ENCODE measurements at regions of chr3 and their contacts with region 1.

Region 1: GRCh38 chr3:134597390-134597970 is 53.3 kb downstream of the KY start:
- DNase-seq: no peak
- H3K4me3 ChIP-seq: peak overlapping the region in 1 of 8 donors; percentile 51
- H3K27ac ChIP-seq: peak overlapping the region in 6 of 8 donors; percentile 11 to 83 (median 52)
- H3K4me1 ChIP-seq: peaks cover 0 to 42% (median 9%) of the 10 kb centered on the region in 6 donors
- H3K27me3 ChIP-seq: peaks cover 0 to 16% (median 0%) of the 10 kb centered on the region in 7 donors
- CTCF ChIP-seq: no peak
- POLR2A ChIP-seq: no peak

Region 2: GRCh38 chr3:134294302-134295280 is 302.9 kb before region 1 on chr3:
- intact Hi-C with region 1: no loop called
- DNase-seq: no peak
- H3K4me3 ChIP-seq: no peak overlapping the region
- H3K27ac ChIP-seq: no peak overlapping the region
- H3K4me1 ChIP-seq: peaks cover 0 to 25% (median 10%) of the 10 kb centered on the region in 6 donors
- H3K27me3 ChIP-seq: peaks cover 0 to 13% (median 0%) of the 10 kb centered on the region in 7 donors
- CTCF ChIP-seq: no peak
- POLR2A ChIP-seq: no peak

Region 3: DNA sequence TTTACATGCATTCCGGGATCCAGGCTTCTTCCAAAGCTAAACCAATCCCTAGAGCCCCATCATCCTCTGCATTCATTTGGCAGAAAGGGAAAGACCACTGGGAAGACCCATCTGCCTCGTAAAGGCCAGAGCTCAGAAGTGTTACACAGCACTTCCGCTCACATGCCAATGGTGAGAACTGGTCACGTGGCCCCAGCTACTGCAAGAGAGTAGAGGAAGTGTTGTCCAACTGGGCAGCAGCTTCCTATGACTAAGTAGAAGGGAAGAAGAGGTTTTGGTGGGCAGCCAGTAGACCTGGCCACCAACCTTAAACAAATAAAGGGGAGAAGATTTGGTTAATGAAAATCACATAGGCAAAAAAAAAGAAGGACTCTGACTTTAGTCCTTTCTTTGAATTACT is 1293.6 kb after region 1 on chr3:
- intact Hi-C with region 1: loop called (anchors 5 kb)
- DNase-seq: no peak
- H3K4me3 ChIP-seq: no peak overlapping the region
- H3K27ac ChIP-seq: no peak overlapping the region
- H3K4me1 ChIP-seq: no peaks in the 10 kb centered on the region
- H3K27me3 ChIP-seq: no peaks in the 10 kb centered on the region
- CTCF ChIP-seq: no peak
- POLR2A ChIP-seq: no peak